ENCODE measurements at regions of chrX and their contacts with region 1.

Region 1: DNA sequence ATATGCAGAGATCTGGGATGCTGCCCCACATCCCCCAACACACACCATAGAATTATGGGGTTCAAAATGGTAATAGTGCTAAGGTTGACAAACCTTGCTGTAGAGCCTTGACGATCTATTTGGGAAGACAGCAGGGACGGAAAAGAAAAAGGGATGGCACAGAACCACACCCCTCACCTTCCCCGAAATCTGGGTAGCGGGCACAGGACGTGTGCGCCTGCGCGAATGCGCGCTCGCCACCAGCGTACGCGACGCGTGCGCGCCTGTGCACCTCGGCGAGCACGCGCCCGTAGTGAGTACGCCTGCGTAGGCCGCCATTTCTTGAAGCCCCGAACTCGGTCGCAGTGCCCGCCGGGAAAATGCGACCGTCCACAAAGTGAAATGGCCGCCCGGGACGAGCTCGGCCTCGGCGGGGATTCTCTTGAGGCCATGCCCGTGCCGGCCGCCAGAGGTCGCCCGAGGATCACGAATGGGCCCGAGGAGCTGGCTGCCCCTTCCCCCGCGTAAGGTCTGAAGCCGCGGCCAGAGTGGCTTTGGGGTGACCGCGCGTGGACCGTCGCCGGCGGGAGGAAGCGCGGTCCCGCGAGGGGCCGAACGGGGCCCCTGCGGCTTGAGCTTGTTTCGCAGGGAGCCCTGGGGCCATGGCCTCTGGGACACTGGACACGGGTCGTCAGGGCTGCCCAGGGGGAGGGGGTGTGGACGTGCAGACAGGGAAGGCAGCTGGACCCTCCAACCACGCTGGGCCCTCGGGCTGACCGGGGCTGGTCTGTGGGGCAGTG is 43.6 kb downstream of the ZNF185 start:
- DNase-seq: peak; percentile 80 to 96 (median 88)
- ATAC-seq: peak; percentile 97
- H3K4me3 ChIP-seq: peak overlapping the region; percentile 57
- H3K4me3 Mint-ChIP-seq: peak overlapping the region; percentile 86
- H3K27ac ChIP-seq: peak overlapping the region; percentile 56 to 62
- H3K27ac Mint-ChIP-seq: peak overlapping the region; percentile 89
- H3K4me1 ChIP-seq: peaks cover 14% of the 10 kb centered on the region
- H3K4me1 Mint-ChIP-seq: peaks cover 9% of the 10 kb centered on the region
- H3K27me3 ChIP-seq: no peaks in the 10 kb centered on the region
- H3K27me3 Mint-ChIP-seq: no peaks in the 10 kb centered on the region
- CTCF ChIP-seq: peak; percentile 66

Region 2: GRCh38 chrX:153032397-153033118 is 91.0 kb after region 1 on chrX:
- CTCF ChIA-PET with region 1: interaction called, 6 read pairs
- POLR2A ChIA-PET with region 1: no interaction called
- intact Hi-C with region 1: loop called in 1 of 2 experiments (anchors 5 kb)
- DNase-seq: peak; percentile 18 to 84 (median 58)
- ATAC-seq: peak; percentile 72
- H3K4me3 ChIP-seq: peak overlapping the region; percentile 59
- H3K4me3 Mint-ChIP-seq: peak overlapping the region; percentile 84
- H3K27ac ChIP-seq: peak overlapping the region in 1 of 2 donors; percentile 29
- H3K27ac Mint-ChIP-seq: peak overlapping the region; percentile 80
- H3K4me1 ChIP-seq: peaks cover 25% of the 10 kb centered on the region
- H3K4me1 Mint-ChIP-seq: peaks cover 5% of the 10 kb centered on the region
- H3K27me3 ChIP-seq: no peaks in the 10 kb centered on the region
- H3K27me3 Mint-ChIP-seq: no peaks in the 10 kb centered on the region
- CTCF ChIP-seq: peak; percentile 70

Region 3: DNA sequence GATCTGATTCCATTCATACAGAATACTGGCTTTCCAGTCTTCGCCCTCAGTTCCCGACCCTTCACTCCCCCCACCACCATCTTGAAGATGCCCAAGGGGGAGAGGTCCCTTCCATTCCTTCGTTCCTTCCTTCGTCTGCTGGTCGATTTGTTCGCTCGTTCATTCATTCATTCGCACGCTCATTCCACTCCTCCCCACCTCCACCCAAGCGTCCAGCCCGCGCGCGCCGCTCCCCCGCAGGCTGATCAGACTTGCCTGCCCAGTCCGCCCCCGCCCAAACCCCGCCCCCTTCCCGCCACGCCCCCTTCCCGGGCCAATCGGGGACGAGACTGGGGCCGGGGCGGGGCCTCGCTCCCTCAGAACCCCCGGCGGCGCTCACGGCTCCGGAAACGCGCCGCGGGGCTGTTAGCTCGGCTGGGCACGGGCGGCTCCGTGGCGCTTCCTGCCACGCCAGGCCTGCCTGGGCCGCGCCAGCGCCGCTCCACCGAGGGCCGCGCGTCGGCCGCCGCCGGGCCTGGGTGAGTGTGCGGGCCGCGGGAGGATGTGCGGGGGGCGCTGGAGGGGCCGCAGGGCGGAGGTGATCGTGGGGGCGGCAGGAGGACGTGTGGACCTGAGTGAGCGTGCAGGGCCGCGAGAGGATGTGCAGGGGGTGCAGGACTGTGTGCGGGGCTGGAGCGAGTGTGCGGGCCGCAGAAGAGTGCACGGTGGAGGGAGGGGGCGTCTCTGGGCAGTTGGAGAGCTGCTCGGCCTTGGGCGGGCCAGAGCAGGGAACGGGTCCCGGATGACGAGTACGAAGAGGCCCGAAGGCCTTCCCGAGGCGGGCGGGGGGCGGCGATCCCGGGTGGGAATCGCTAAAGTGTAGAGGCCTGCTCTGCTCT is 392.5 kb after region 1 on chrX and contains the start of gene ZNF275:
- CTCF ChIA-PET with region 1: no interaction called
- POLR2A ChIA-PET with region 1: interaction called, 7 read pairs
- intact Hi-C with region 1: loop called in 1 of 2 experiments (anchors 5 kb)
- DNase-seq: peak; percentile 60 to 91 (median 77)
- ATAC-seq: peak; percentile 97
- H3K4me3 ChIP-seq: peak within 1 kb of the TSS; percentile 80
- H3K4me3 Mint-ChIP-seq: peak within 1 kb of the TSS; percentile 89
- H3K27ac ChIP-seq: peak within 1 kb of the TSS in 1 of 2 donors; percentile 41
- H3K27ac Mint-ChIP-seq: peak within 1 kb of the TSS; percentile 66
- H3K4me1 ChIP-seq: peaks cover 40% of the 10 kb centered on the region
- H3K4me1 Mint-ChIP-seq: peaks cover 46% of the 10 kb centered on the region
- H3K27me3 ChIP-seq: peaks cover 0 to 2% of the 10 kb centered on the region in 2 experiments
- H3K27me3 Mint-ChIP-seq: peaks cover 3% of the 10 kb centered on the region
- CTCF ChIP-seq: no peak
- total RNA-seq, gene ZNF275: 10.5 to 11.3 TPM

Region 4: DNA sequence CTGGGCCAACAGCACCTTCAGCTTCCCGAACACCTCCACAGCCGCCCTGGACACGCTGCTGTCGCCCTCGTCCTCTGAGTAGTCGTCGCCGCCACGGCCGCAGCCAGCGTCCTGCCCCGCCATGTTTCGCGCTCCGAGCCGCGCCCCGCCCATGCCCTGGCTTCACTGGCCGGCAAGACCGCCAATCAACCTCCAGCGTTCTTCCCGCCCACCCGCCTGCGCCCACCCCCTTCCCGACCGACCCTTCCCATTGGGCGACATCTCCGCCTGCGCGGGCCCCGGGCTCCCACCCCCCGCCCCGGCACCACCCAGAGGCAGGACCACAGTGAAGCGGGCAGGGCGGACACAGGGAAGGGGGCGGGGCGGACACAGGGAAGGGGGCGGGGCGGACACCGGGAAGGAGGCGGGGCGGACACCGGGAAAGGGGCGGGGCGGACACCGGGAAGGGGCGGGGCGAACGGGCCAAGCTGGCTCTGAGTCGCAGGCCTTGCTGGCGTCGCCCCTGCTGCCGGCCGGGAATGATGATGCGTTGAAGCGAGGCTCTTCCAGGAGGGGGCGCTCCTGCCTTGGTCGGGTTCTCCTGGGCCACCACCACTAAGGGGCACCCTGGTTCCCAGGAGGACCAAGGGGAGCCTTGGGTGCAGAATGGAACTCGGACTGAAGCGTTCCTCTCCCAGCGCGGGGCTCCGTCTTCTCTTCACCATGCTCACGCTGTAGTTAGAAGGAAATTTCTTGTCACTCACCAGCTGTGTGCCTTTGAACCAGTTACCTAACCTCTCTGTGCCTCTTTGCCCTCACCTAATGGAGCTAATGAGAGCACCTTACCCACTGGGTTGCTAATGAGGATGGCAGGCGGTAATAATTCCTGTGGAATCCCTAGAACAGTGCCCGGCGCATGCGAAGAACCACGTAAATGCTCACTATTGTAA is 529.2 kb after region 1 on chrX and contains the start of gene HAUS7:
- CTCF ChIA-PET with region 1: interaction called, 7 read pairs
- POLR2A ChIA-PET with region 1: no interaction called
- intact Hi-C with region 1: loop called (anchors 1 to 5 kb)
- DNase-seq: peak; percentile 81 to 95 (median 86)
- ATAC-seq: peak; percentile 83
- H3K4me3 ChIP-seq: peak within 1 kb of the TSS; percentile 75
- H3K4me3 Mint-ChIP-seq: peak within 1 kb of the TSS; percentile 87
- H3K27ac ChIP-seq: peak within 1 kb of the TSS; percentile 29 to 46
- H3K27ac Mint-ChIP-seq: peak within 1 kb of the TSS; percentile 84
- H3K4me1 ChIP-seq: peaks cover 40% of the 10 kb centered on the region
- H3K4me1 Mint-ChIP-seq: peaks cover 6% of the 10 kb centered on the region
- H3K27me3 ChIP-seq: no peaks in the 10 kb centered on the region
- H3K27me3 Mint-ChIP-seq: no peaks in the 10 kb centered on the region
- CTCF ChIP-seq: peak; percentile 56
- total RNA-seq, gene HAUS7: 24.4 to 25.6 TPM

Region 5: GRCh38 chrX:153507484-153508178 is 566.1 kb after region 1 on chrX:
- CTCF ChIA-PET with region 1: interaction called, 12 read pairs
- POLR2A ChIA-PET with region 1: interaction called, 4 read pairs
- intact Hi-C with region 1: loop called (anchors 5 kb)
- DNase-seq: peak; percentile 73 to 89 (median 80)
- ATAC-seq: peak; percentile 100
- H3K4me3 ChIP-seq: no peak overlapping the region
- H3K4me3 Mint-ChIP-seq: no peak overlapping the region
- H3K27ac ChIP-seq: no peak overlapping the region
- H3K27ac Mint-ChIP-seq: no peak overlapping the region
- H3K4me1 ChIP-seq: peaks cover 9% of the 10 kb centered on the region
- H3K4me1 Mint-ChIP-seq: no peaks in the 10 kb centered on the region
- H3K27me3 ChIP-seq: no peaks in the 10 kb centered on the region
- H3K27me3 Mint-ChIP-seq: no peaks in the 10 kb centered on the region
- CTCF ChIP-seq: peak; percentile 66

Region 6: DNA sequence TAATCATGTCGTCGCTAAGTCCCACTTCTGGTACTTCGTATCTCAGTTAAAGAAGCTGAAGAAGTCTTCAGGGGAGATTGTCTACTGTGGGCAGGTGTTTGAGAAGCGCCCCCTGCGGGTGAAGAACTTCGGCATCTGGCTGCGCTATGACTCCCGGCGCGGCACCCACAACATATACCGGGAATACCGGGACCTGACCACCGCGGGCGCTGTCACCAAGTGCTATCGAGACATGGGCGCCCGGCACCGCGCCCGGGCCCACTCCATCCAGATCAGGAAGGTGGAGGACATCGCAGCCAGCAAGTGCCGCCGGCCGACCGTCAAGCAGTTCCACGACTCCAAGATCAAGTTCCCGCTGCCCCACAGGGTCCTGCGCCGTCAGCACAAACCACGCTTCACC is 720.7 kb after region 1 on chrX:
- CTCF ChIA-PET with region 1: interaction called, 4 read pairs
- POLR2A ChIA-PET with region 1: interaction called, 4 read pairs
- intact Hi-C with region 1: loop called in 1 of 2 experiments (anchors 5 kb)
- DNase-seq: peak; percentile 30 to 77 (median 53)
- ATAC-seq: no peak
- H3K4me3 ChIP-seq: peak overlapping the region; percentile 25
- H3K4me3 Mint-ChIP-seq: no peak overlapping the region
- H3K27ac ChIP-seq: no peak overlapping the region
- H3K27ac Mint-ChIP-seq: no peak overlapping the region
- H3K4me1 ChIP-seq: peaks cover 6% of the 10 kb centered on the region
- H3K4me1 Mint-ChIP-seq: peaks cover 5% of the 10 kb centered on the region
- H3K27me3 ChIP-seq: peaks cover 0 to 2% of the 10 kb centered on the region in 2 experiments
- H3K27me3 Mint-ChIP-seq: peaks cover 15% of the 10 kb centered on the region
- CTCF ChIP-seq: peak; percentile 51

Region 7: DNA sequence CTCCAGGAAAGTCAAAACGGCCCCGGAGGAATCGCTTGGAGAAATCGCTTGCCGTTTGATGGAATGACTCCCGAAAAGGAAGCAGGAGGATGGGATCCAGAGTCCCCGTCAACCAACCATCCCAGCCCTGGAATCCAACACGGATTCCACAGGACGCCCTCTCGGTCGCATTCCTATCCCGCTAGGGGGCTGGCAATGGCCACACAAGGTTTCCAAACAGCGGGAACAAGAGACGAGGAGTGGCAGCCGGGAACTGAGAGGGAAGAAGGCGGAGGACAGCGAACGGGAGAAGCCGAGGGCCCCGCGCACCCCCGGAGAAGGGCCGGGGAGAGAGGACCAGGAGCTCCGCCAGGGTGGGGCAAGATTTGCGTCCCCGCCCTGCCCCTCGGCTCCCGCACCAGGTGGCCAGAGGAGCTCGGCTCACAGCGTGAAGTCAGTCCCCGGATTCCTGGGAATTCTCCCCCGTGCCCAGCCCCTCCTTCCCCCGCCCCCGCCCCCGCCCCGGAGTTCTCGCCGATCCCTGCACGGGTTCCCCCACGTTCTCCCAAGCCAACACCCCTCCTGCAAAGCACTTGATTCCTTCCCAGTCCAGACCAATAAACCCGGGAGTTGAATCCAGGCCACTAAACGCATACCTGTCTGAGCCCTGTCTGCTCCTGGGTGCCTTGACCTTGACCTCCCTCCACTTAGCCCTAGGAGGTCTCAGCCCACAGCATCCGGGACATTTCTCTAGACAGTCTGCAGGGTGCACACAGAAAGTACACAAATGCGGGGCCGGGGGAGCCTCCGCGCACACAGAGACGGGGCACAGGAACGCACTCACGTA is 887.4 kb after region 1 on chrX:
- CTCF ChIA-PET with region 1: no interaction called
- POLR2A ChIA-PET with region 1: no interaction called
- intact Hi-C with region 1: no loop called
- DNase-seq: peak in 1 of 14 experiments; percentile 23
- ATAC-seq: peak; percentile 43
- H3K4me3 ChIP-seq: peak overlapping the region; percentile 34
- H3K4me3 Mint-ChIP-seq: peak overlapping the region; percentile 78
- H3K27ac ChIP-seq: no peak overlapping the region
- H3K27ac Mint-ChIP-seq: no peak overlapping the region
- H3K4me1 ChIP-seq: peaks cover 34% of the 10 kb centered on the region
- H3K4me1 Mint-ChIP-seq: peaks cover 26% of the 10 kb centered on the region
- H3K27me3 ChIP-seq: no peaks in the 10 kb centered on the region
- H3K27me3 Mint-ChIP-seq: no peaks in the 10 kb centered on the region
- CTCF ChIP-seq: no peak